Activated CD4-positive, alpha-beta T cell treated with anti-CD3 and anti-CD28 coated beads for 36 hours (primary cell): ENCODE measurements at regions of chr9 and their contacts with region 1.

Region 1: GRCh38 chr9:15529566-15530324 is 19.0 kb upstream of the PSIP1 start:
- DNase-seq: no peak
- ATAC-seq: no peak
- H3K4me3 Mint-ChIP-seq: no peak overlapping the region
- H3K27ac Mint-ChIP-seq: peak overlapping the region; percentile 19
- H3K4me1 Mint-ChIP-seq: peaks cover 16% of the 10 kb centered on the region
- H3K27me3 Mint-ChIP-seq: peaks cover under 1% of the 10 kb centered on the region

Region 2: DNA sequence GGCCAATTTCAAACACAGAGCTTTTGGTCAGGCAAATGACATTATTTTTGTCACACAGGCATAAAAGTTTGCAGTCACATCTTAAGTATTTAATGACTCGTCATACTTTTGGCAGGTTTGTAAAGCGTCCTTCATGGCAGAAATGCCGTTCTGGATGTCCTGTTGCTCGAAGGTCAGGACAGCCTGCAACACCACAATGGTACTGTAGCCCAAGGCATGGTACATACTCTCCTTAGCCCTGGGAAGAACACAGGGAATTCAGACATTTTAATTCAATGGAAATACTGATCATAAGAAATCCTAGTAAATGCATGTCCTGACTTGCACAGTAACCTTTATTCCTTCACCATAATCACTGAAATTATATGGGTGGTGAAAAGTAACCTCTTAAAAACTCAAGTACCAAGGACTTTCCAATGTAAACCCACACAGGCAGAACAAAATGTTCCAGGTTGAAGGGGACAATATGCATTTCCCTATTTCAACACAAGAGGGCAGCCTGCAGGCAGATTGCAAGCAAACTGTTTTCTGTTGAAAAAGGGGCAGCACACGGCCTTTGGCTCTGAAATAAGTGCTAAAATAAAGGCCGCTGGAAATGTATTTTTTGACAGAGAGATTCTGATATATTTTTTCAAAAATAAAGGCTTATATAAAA is 318.5 kb before region 1 on chr9:
- CTCF ChIA-PET with region 1: interaction called, 8 read pairs
- POLR2A ChIA-PET with region 1: no interaction called
- intact Hi-C with region 1: loop called in 1 of 2 experiments (anchors 5 kb)
- DNase-seq: peak; percentile 67
- ATAC-seq: peak; percentile 45
- H3K4me3 Mint-ChIP-seq: no peak overlapping the region
- H3K27ac Mint-ChIP-seq: no peak overlapping the region
- H3K4me1 Mint-ChIP-seq: peaks cover 23% of the 10 kb centered on the region
- H3K27me3 Mint-ChIP-seq: no peaks in the 10 kb centered on the region

Region 3: DNA sequence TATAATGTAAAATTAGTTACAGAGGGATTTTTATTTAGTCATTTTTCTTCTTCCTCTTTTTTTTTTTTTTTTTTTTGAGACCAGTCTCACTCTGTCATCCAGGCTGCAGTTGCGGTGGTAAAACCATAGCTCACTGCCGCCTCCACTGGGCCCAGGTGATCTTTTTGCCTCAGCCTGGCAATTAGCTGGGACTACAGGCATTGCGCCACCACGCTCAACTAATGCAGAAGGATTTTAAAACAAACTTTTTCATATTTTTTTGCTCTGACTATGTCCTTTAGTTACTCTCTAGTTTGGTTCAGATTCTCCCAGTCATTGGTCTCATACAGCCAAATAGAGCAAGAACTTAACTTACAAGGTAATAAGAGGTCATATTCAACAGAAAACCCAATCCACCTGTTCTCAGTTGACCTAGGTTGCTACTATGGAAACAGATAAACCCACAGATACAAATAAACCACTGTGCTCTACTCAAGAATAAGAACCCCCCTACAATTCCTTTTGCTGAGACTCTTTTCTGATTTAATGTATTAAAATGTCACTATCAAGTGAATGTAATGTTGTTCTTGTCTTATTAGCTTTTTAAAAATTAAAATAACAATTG is 172.6 kb before region 1 on chr9:
- CTCF ChIA-PET with region 1: no interaction called
- POLR2A ChIA-PET with region 1: no interaction called
- intact Hi-C with region 1: loop called in 1 of 2 experiments (anchors 1 kb)
- DNase-seq: peak; percentile 68
- ATAC-seq: peak; percentile 88
- H3K4me3 Mint-ChIP-seq: no peak overlapping the region
- H3K27ac Mint-ChIP-seq: no peak overlapping the region
- H3K4me1 Mint-ChIP-seq: peaks cover 12% of the 10 kb centered on the region
- H3K27me3 Mint-ChIP-seq: no peaks in the 10 kb centered on the region

Region 4: GRCh38 chr9:15469406-15469805 is 60.3 kb before region 1 on chr9:
- CTCF ChIA-PET with region 1: no interaction called
- POLR2A ChIA-PET with region 1: no interaction called
- intact Hi-C with region 1: no loop called
- DNase-seq: no peak
- ATAC-seq: no peak
- H3K4me3 Mint-ChIP-seq: no peak overlapping the region
- H3K27ac Mint-ChIP-seq: no peak overlapping the region
- H3K4me1 Mint-ChIP-seq: peaks cover 18% of the 10 kb centered on the region
- H3K27me3 Mint-ChIP-seq: no peaks in the 10 kb centered on the region

Region 5: GRCh38 chr9:15485836-15486666 is 43.7 kb before region 1 on chr9:
- CTCF ChIA-PET with region 1: interaction called, 4 read pairs
- POLR2A ChIA-PET with region 1: no interaction called
- intact Hi-C with region 1: loop called in 1 of 2 experiments (anchors 1 kb)
- DNase-seq: no peak
- ATAC-seq: peak; percentile 61
- H3K4me3 Mint-ChIP-seq: no peak overlapping the region
- H3K27ac Mint-ChIP-seq: peak overlapping the region; percentile 72
- H3K4me1 Mint-ChIP-seq: peaks cover 41% of the 10 kb centered on the region
- H3K27me3 Mint-ChIP-seq: no peaks in the 10 kb centered on the region

Region 6: DNA sequence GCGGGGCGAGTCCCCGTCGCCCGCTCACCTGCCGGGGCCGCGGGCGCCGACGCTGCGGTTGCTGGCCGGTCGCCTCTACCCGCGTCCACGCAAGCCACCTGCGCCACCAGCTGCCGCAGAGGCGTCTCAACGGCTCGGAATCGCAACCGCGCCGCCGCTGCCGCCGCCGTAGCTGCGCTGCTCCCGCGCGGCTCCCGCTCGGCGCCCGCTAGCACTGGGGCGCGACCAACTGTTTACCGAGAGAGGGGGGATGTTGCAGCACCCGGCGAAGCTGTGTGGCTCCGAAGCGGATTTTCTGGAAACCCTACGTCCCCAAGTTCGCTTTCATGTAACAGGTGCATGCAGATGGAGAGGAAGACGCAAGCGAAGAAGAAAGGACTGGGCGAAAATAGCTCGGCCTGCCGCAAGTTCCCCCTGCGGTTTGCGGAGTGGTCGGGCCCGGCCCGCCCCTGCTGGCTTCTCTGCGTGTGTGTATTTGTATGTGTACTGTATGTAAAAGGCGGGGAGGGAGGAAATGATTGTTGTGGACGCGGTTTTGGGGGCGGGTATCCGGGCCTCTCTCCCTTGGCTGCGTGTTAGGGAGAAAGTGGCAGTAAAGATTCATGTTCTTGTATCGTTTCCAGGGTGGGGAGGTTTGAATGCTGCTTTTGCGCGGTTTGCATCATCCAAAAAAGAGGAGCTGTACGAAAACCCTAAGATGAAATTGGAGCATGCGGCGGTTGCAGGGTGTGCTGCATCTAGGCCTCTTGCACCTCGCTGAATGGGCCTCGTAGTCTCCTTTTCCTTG is 18.8 kb before region 1 on chr9 and contains the start of gene PSIP1:
- CTCF ChIA-PET with region 1: interaction called, 11 read pairs
- POLR2A ChIA-PET with region 1: interaction called, 3 read pairs
- intact Hi-C with region 1: loop called (anchors 1 kb)
- DNase-seq: peak; percentile 92
- ATAC-seq: peak; percentile 86
- H3K4me3 Mint-ChIP-seq: peak within 1 kb of the TSS; percentile 85
- H3K27ac Mint-ChIP-seq: peak within 1 kb of the TSS; percentile 98
- H3K4me1 Mint-ChIP-seq: peaks cover 48% of the 10 kb centered on the region
- H3K27me3 Mint-ChIP-seq: no peaks in the 10 kb centered on the region
- total RNA-seq, gene PSIP1: 139 to 189 TPM